ENCODE measurements at regions of chr20 and their contacts with region 1.

Region 1: GRCh38 chr20:41783423-41784208 is 165.4 kb upstream of the CHD6 start:
- DNase-seq: no peak
- ATAC-seq: no peak
- H3K4me3 ChIP-seq: no peak overlapping the region
- H3K27ac ChIP-seq: no peak overlapping the region
- H3K4me1 ChIP-seq: no peaks in the 10 kb centered on the region
- H3K27me3 ChIP-seq: peaks cover 0 to 8% (median 0%) of the 10 kb centered on the region in 9 donors
- CTCF ChIP-seq: no peak
- POLR2A ChIP-seq: no peak

Region 2: GRCh38 chr20:41722236-41722635 is 61.4 kb before region 1 on chr20:
- intact Hi-C with region 1: loop called in 1 of 10 experiments (anchors 10 kb)
- DNase-seq: no peak
- ATAC-seq: no peak
- H3K4me3 ChIP-seq: no peak overlapping the region
- H3K27ac ChIP-seq: no peak overlapping the region
- H3K4me1 ChIP-seq: no peaks in the 10 kb centered on the region
- H3K27me3 ChIP-seq: peaks cover 0 to 6% (median 0%) of the 10 kb centered on the region in 9 donors
- CTCF ChIP-seq: no peak
- POLR2A ChIP-seq: no peak